Keratinocyte (primary cell): ENCODE measurements at regions of chr1 and their contacts with region 1.

Region 1: GRCh38 chr1:159798893-159799292 is 3.3 kb upstream of the FCRL6 start:
- DNase-seq: peak; percentile 48
- H3K4me3 ChIP-seq: no peak overlapping the region
- H3K27ac ChIP-seq: no peak overlapping the region
- H3K4me1 ChIP-seq: no peaks in the 10 kb centered on the region
- H3K27me3 ChIP-seq: peaks cover 7% of the 10 kb centered on the region
- CTCF ChIP-seq: peak; percentile 76 to 93 (median 80)

Region 2: GRCh38 chr1:159829273-159829634 is 30.4 kb after region 1 on chr1:
- dilution Hi-C with region 1: no loop called
- DNase-seq: no peak
- H3K4me3 ChIP-seq: no peak overlapping the region
- H3K27ac ChIP-seq: no peak overlapping the region
- H3K4me1 ChIP-seq: peaks cover 6% of the 10 kb centered on the region
- H3K27me3 ChIP-seq: no peaks in the 10 kb centered on the region
- CTCF ChIP-seq: peak; percentile 35 to 59 (median 37)

Region 3: DNA sequence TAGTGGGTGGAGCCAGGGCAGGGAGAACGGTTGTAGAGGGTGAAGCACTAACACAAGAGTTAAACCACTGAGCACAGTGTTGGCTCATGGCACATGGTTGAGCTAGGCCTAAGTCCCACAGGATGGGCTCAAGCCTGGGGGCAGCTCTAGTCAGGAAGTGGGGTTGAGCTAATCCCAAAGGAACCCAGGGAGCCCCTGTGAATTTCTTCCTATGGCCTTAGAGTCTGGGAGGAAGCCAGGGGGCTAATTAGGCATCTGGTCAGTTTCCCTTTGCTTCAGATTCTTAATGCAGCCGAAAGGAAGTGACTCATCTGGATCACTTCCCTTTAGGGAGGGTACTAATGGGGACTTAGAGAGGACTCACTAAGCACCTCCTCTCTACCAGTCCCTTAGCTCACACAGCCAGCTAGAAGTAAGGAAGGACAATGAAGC is 90.9 kb after region 1 on chr1:
- dilution Hi-C with region 1: loop called (anchors 5 kb)
- DNase-seq: no peak
- H3K4me3 ChIP-seq: no peak overlapping the region
- H3K27ac ChIP-seq: no peak overlapping the region
- H3K4me1 ChIP-seq: peaks cover 19% of the 10 kb centered on the region
- H3K27me3 ChIP-seq: no peaks in the 10 kb centered on the region
- CTCF ChIP-seq: no peak